ENCODE measurements at regions of chr5 and their contacts with region 1.

Region 1: DNA sequence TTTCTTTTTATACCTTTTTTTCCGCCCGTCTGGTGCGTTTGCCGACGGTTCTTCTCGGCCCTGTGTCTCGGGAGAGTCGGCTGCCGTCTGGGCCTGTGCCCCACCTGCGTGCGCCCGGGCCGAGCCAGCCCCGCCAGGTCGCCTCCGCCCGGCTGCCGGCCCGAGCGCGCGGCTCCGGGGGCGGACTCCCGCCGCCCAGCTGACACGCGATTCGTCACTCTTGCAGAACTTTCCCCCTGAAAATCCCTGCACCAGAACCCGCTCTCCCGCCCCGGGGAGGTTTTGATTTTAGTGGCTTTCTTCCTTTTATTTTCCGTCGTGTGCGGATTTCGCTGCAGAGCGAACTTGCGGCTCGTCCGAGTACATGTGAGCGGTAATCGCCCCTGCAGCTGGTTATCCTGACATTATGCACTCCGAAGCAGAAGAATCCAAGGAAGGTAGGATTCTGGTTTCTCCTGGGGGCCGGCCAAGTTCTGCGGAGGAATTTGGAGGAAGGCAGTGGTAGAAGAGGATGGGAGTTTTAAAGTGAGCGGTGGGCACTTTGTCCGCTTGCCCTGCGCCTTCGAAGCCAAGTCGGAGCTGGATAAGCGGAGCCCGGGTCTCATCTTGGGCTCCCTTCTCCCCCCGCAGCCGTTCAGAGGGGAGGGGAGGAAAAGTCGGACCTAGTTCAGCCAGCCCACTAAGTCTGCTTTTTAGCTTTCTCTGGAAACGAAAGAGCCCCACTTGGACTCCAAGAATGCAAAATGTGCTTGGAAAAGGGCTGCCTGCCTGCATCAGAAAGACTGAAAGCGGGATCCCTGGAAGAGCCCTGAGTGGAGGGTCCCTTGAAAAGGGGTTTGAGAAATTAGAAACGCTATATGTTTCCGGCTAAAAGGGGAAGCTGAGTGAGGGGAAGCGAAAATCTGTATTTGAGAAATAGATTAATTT is at the start of gene TNFAIP8:
- DNase-seq: peak; percentile 73
- H3K4me3 Mint-ChIP-seq: peak within 1 kb of the TSS; percentile 95
- H3K27ac Mint-ChIP-seq: peak within 1 kb of the TSS; percentile 79
- H3K4me1 Mint-ChIP-seq: peaks cover 44% of the 10 kb centered on the region
- H3K27me3 Mint-ChIP-seq: no peaks in the 10 kb centered on the region
- CTCF ChIP-seq: no peak
- total RNA-seq, gene TNFAIP8: 13.0 and 16.2 TPM in 2 replicates

Region 2: DNA sequence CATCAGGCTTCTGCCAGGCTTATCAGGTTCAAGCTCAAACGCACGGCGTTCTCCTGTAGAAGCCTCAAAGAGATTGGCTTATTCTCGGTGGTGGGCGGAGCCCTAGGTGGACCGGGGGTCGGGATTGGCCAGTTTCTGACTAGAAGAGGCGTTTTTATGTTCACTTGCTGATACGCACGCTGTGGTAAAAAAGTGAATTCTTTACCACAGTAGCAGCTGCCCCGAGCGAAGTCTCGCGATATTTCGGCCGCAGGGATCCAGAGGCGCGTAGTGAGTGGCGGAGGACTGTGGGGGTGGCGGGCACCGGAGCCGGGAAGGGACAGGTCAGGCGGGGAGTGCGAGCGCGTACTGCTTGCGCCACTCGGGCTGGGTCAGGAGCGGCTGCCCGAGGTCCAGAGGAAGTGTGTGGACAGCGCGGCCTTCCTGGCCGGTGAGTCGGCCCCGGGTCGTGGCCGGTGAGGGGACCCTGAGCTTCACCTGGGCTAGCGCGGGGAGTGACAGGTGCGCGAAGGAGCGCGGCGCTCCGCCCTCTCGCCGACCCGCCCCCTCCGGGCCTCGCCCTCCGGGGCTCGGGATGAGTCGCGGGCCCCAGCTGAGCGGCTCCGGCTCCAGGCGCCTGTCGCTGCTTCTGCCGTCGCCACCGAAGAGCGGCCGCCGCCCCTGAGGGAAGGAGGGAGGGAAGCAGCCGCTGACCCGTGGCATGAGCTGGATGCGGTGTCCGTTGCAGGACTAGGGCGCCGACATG is 284.9 kb before region 1 on chr5 and contains the start of gene DMXL1:
- CTCF ChIA-PET with region 1: no interaction called
- POLR2A ChIA-PET with region 1: interaction called, 29 read pairs
- intact Hi-C with region 1: loop called (anchors 2 kb)
- DNase-seq: peak; percentile 100
- H3K4me3 Mint-ChIP-seq: peak within 1 kb of the TSS; percentile 77
- H3K27ac Mint-ChIP-seq: peak within 1 kb of the TSS; percentile 79
- H3K4me1 Mint-ChIP-seq: peaks cover 24% of the 10 kb centered on the region
- H3K27me3 Mint-ChIP-seq: no peaks in the 10 kb centered on the region
- CTCF ChIP-seq: no peak
- total RNA-seq, gene DMXL1: 38.1 and 45.1 TPM in 2 replicates

Region 3: GRCh38 chr5:119290161-119290569 is 65.8 kb before region 1 on chr5:
- CTCF ChIA-PET with region 1: interaction called, 3 read pairs
- POLR2A ChIA-PET with region 1: interaction called, 10 read pairs
- intact Hi-C with region 1: no loop called
- DNase-seq: no peak
- H3K4me3 Mint-ChIP-seq: no peak overlapping the region
- H3K27ac Mint-ChIP-seq: no peak overlapping the region
- H3K4me1 Mint-ChIP-seq: peaks cover 42% of the 10 kb centered on the region
- H3K27me3 Mint-ChIP-seq: no peaks in the 10 kb centered on the region
- CTCF ChIP-seq: no peak

Region 4: DNA sequence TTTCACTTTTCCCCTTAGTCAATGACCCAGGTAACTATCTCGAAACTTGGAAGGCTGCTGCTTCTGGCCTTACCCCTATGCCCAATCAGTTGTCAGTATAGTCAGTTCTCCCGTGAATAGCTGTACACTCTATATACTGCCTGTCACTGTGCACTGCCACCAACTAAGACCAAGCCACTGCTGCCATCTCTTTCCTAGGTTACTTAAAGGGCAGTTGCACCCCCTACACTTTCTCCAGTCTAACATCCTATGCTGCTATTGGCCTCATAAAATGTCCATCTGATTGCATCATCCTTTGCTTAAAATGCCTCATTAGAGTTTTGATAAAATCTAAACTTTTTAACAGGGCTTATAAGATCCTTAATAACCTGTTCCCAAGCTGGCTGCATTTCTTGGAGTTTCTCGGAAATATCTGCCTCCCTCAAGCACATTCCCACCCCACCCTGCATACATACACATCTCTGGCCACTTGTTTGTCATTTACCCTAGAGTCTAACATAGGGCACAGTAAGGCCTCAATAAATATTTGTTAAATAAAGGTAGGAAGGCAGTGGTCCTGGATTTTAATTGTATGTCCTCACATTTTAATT is 32.9 kb before region 1 on chr5:
- CTCF ChIA-PET with region 1: interaction called, 161 read pairs
- POLR2A ChIA-PET with region 1: interaction called, 385 read pairs
- intact Hi-C with region 1: loop called (anchors 1 kb)
- DNase-seq: peak; percentile 54
- H3K4me3 Mint-ChIP-seq: no peak overlapping the region
- H3K27ac Mint-ChIP-seq: peak overlapping the region; percentile 98
- H3K4me1 Mint-ChIP-seq: peaks cover 44% of the 10 kb centered on the region
- H3K27me3 Mint-ChIP-seq: no peaks in the 10 kb centered on the region
- CTCF ChIP-seq: no peak

Region 5: DNA sequence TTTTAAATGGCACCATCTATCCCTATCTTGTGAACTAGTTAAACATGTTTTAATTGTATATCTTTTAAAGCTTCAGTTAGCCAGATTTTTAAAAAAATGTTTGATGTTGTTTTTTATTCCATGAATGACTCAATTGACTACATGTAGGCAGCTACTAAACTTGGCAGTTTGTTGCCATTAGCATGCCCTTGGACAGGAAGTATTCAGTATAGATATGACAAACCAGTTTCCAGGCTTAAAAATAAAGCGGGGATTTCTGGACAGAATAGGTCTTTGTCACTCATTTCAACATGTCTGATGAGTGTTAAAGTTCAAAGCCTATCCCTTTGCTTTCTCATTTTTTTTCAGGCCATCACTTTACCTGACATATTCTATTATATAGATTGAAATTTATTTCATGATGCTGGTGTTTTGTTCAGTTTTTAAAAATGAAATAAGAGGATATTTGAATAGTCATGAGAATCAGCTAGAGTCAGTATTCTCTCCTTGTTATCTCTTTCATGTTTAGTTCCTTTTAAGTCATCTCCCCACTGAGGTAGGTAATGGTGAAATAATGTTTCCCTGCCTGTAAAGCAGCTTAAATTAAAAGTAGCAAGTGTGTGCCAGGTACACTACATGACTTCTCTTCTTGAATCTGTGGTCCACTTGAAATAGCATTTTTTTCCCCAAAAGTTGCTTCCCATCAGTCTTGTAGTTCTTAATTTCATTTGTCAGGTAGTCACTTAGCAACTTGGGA is 11.7 kb after region 1 on chr5:
- CTCF ChIA-PET with region 1: interaction called, 8 read pairs
- POLR2A ChIA-PET with region 1: interaction called, 70 read pairs
- intact Hi-C with region 1: no loop called
- DNase-seq: peak; percentile 81
- H3K4me3 Mint-ChIP-seq: peak overlapping the region; percentile 45
- H3K27ac Mint-ChIP-seq: peak overlapping the region; percentile 90
- H3K4me1 Mint-ChIP-seq: peaks cover 47% of the 10 kb centered on the region
- H3K27me3 Mint-ChIP-seq: no peaks in the 10 kb centered on the region
- CTCF ChIP-seq: no peak

Region 6: DNA sequence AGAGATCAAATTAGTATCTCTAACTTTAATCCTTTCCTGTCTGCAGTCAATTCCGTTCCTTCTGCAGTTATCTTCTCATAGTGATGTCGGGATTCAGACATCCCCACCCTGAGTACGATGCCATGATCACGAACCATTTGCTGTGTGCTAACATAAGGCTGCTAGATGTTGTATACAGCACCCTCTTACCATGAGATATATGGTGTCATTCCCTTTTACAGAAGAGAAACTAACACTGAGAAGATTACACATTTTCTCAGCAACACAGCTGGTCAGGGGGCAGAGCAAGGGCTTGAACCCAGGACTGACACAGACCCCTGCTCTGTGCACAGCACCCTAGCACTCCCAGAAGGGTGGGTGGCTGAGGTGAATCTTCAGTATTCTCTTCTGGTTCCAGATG is 49.5 kb after region 1 on chr5:
- CTCF ChIA-PET with region 1: interaction called, 132 read pairs
- POLR2A ChIA-PET with region 1: interaction called, 492 read pairs
- intact Hi-C with region 1: no loop called
- DNase-seq: no peak
- H3K4me3 Mint-ChIP-seq: no peak overlapping the region
- H3K27ac Mint-ChIP-seq: no peak overlapping the region
- H3K4me1 Mint-ChIP-seq: no peaks in the 10 kb centered on the region
- H3K27me3 Mint-ChIP-seq: no peaks in the 10 kb centered on the region
- CTCF ChIP-seq: no peak